ENCODE measurements at regions of chr4 and their contacts with region 1.

Region 1: DNA sequence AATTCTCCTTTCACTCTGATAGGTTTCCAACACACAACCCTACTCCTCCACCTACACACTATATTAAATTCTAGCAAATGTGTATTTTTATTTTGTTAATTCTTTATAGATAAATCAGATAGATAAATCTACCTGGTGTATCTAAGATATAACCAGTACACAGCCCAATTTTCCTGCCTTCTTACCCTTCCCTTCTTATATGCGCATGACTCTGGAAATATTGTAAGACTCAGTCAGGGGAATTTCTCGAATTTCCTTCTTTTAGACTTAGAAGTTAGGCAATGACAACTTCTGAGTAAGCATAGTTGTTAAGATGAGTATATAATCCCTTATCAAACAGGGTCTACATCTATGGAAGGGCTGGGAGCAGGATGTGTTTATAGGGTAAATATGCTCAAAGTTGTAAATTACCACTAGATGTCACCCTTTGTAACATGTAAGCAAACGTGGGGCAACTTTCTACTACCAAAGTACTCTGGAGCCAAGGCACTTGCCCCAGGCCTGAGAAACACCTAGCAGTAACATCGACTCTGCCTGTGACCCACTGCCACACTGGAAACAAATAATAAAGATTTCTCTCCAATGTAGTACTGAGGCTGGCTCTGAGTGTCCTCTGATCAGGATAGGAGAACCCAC is 444.7 kb downstream of the IQCM start:
- DNase-seq: peak in 1 of 10 donors; percentile 26

Region 2: GRCh38 chr4:149549911-149550310 is 179.0 kb after region 1 on chr4:
- intact Hi-C with region 1: loop called (anchors 2 kb)
- DNase-seq: peak in 2 of 10 donors; percentile 4 to 21

Region 3: GRCh38 chr4:149897783-149898182 is 526.9 kb after region 1 on chr4:
- intact Hi-C with region 1: loop called (anchors 5 kb)
- DNase-seq: no peak